ENCODE measurements at regions of chr20 and their contacts with region 1.

Region 1: DNA sequence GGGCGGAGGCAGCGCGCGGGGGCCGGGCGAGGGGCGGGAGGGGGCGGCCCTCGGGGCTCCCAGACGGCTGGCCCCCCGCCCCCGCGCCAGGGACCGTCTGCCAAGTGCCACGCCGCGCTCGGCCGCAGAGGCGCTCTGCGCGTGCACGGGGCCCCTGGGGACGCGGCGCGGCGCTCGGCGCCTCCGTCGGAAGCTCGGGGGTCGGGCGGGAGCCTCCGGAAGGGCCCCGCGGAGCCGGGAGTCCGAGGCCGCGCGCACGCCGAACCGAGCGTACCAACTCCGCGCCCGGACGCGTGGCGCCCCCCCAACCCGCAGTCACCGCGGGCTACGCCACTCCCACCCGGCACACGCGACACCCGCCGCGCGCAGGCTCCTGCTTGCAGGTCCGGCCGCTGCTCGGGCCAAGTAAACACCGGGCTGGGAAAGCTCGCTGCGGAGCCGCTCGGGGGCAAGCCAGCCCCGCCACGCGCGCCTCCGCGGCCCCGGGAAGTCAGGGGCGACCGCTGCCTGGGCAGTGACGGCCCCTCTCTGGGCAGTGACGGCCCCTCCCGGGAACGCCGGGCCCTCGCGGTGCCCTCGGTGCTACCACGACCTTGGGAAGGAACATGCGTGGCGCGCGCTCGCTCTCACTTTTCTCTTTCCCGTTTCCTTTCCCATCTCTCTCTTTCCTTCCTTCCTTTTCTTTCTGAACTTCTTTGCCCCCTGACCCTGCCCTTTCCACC is 384 bp upstream of the PREX1 start:
- DNase-seq: peak; percentile 89
- ATAC-seq: peak; percentile 90
- H3K4me3 ChIP-seq: peak overlapping the region; percentile 63
- H3K27ac ChIP-seq: peak overlapping the region; percentile 70
- H3K4me1 ChIP-seq: peaks cover 52% of the 10 kb centered on the region
- H3K27me3 ChIP-seq: peaks cover 7% of the 10 kb centered on the region
- CTCF ChIP-seq: no peak

Region 2: DNA sequence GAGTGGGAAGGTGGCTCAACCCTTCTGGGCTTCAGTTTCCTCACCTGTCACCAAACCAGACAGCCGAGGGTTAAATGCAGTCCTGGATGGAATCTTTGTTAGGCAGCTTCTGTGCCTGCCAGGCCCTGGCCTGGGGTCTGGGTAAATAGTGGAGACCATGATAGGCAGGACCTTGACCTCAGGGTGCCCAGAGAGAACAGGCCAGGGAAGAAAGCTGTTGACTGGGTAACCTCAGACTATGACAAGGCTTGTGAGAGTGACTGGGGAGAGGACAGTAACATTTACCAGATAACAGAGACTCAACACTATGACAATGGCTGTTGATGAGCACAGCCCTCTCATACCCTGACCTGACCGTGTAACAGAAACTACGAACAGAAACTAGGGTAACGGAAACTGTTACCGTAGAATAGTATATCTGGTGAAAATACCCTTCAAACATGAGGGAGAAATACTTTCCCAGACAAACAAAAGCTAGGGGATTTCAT is 218.6 kb before region 1 on chr20:
- intact Hi-C with region 1: no loop called
- DNase-seq: no peak
- ATAC-seq: no peak
- H3K4me3 ChIP-seq: no peak overlapping the region
- H3K27ac ChIP-seq: no peak overlapping the region
- H3K4me1 ChIP-seq: no peaks in the 10 kb centered on the region
- H3K27me3 ChIP-seq: peaks cover 11% of the 10 kb centered on the region
- CTCF ChIP-seq: no peak

Region 3: GRCh38 chr20:48750947-48751635 is 77.1 kb before region 1 on chr20:
- intact Hi-C with region 1: loop called (anchors 10 kb)
- DNase-seq: peak; percentile 80
- ATAC-seq: peak; percentile 90
- H3K4me3 ChIP-seq: no peak overlapping the region
- H3K27ac ChIP-seq: peak overlapping the region; percentile 38
- H3K4me1 ChIP-seq: peaks cover 23% of the 10 kb centered on the region
- H3K27me3 ChIP-seq: no peaks in the 10 kb centered on the region
- CTCF ChIP-seq: no peak

Measured in upper lobe of right lung (tissue), 1 donor.